Adrenal gland (tissue), 19 donors: ENCODE measurements at regions of chr18 and their contacts with region 1.

Region 1: GRCh38 chr18:944440-944839 is 39.8 kb downstream of the ADCYAP1 start:
- DNase-seq: peak in 1 of 7 donors; percentile 3
- H3K4me3 ChIP-seq: no peak overlapping the region
- H3K27ac ChIP-seq: no peak overlapping the region
- H3K4me1 ChIP-seq: no peaks in the 10 kb centered on the region
- H3K27me3 ChIP-seq: no peaks in the 10 kb centered on the region
- CTCF ChIP-seq: no peak
- POLR2A ChIP-seq: no peak

Region 2: DNA sequence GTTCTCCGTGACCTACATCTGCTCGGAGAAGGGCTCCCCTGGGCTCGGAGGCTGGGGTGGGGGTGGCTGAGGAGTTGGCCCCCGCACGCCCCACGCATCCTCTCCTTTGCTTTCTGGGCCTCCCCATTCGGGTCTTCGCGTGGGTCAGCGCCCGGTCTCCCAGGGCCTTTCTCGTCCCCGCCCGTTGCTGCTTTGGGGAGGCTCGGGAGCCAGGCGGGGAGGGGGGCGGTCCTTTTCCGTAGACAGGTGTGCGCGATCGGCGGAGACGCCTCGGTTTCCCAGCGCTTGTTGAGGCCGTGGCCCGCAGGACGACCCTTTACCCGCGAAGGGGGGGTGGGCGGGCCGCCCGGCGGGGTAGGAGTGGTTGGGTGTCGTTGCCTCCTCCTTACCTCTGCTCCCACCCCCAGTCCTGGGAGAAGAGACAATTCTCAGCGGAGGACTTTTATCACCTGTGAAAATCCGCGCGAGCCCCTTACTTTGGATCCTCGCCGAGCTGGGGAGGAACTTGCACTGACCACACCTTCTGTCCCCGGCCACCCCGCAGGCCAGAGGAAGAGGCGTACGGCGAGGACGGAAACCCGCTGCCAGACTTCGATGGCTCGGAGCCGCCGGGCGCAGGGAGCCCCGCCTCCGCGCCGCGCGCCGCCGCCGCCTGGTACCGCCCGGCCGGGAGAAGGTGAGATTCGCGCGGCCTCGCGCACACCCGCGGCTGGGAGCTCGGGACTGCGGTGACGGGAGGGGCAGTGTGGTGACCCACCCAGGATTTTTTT is 37.1 kb before region 1 on chr18:
- intact Hi-C with region 1: no loop called
- DNase-seq: peak in 2 of 7 donors; percentile 18 to 30
- H3K4me3 ChIP-seq: peak overlapping the region in 2 of 4 donors; percentile 43 to 44
- H3K27ac ChIP-seq: no peak overlapping the region
- H3K4me1 ChIP-seq: peaks cover 19 to 31% of the 10 kb centered on the region in 2 donors
- H3K27me3 ChIP-seq: peaks cover 81% of the 10 kb centered on the region
- CTCF ChIP-seq: no peak
- POLR2A ChIP-seq: no peak

Region 3: GRCh38 chr18:1082497-1082896 is 138.1 kb after region 1 on chr18:
- intact Hi-C with region 1: loop called in 1 of 2 experiments (anchors 10 kb)
- DNase-seq: no peak
- H3K4me3 ChIP-seq: no peak overlapping the region
- H3K27ac ChIP-seq: no peak overlapping the region
- H3K4me1 ChIP-seq: no peaks in the 10 kb centered on the region
- H3K27me3 ChIP-seq: no peaks in the 10 kb centered on the region
- CTCF ChIP-seq: no peak
- POLR2A ChIP-seq: no peak